WTC11 (cell line): ENCODE measurements at regions of chr16 and their contacts with region 1.

Region 1: DNA sequence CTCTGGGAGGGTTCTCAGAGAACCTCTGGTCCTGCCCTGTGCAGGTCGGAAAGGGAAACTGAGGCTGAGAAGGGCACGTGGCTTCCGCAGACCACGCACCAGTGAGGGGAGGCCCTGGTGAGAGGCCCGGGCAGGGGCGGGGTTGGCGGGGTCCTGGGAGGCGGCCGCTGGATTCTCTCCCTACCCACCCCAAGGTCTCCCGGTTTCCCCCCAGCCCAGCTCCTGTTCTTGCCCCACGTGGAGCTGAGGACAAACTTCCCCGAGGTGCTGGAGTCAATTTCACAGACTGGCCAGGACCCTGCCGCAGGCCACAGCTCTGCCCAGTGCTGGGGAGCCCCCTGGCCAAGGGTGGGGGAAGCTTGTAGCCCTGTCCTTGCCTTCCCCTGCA is 11.5 kb downstream of the CCL17 start:
- DNase-seq: no peak
- ATAC-seq: no peak
- H3K4me3 Mint-ChIP-seq: 0 out of 2 replicates have a peak overlapping the region, but pooled peaks have one; percentile 67
- H3K27ac Mint-ChIP-seq: no peak overlapping the region
- H3K4me1 Mint-ChIP-seq: peaks cover 27% of the 10 kb centered on the region
- H3K27me3 Mint-ChIP-seq: no peaks in the 10 kb centered on the region
- CTCF ChIP-seq: no peak

Region 2: DNA sequence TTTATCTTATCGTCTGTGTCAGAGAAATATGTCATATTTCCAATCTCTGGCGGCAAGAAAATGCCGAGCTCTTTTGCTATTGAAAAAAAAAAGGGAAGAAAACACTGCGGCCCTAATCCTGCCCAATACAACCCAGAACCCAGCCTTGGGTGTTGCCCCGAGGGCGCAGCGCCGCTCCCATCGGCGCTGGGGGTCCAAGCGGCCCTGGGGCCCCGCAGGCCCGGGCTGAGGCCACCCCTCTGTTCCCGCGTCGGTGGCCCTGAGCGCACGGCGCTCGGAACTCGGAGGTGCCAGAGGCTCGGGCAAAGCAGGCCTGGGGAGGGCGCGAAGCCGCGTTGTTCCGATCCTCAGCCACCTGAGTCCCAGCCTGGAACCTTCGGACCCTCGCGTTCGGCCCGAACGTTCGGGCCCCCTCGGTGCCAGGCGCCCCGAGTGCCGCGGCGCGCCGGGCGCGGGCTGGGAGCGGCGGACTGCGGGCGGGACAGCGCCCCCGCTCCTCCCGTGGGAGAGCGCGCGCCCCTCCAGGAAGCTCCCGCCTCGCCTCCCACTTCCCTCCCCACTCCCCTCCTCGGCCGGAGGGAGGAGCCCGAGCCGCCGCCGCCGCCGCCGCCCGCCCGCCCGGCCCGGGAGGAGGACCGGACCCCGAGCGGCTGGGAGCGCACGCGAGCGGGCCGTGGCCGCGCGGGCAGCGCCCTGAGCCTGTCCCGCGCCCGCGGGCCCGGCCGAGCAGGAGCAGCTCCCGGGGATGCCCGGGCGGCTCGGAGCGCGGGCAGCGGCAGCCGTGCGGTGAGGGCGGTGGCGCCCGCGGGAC is 323.9 kb before region 1 on chr16 and contains the start of gene CPNE2:
- CTCF ChIA-PET with region 1: interaction called, 11 read pairs
- POLR2A ChIA-PET with region 1: no interaction called
- DNase-seq: peak; percentile 42
- ATAC-seq: peak; percentile 35
- H3K4me3 Mint-ChIP-seq: peak within 1 kb of the TSS; percentile 86
- H3K27ac Mint-ChIP-seq: no peak within 1 kb of the TSS
- H3K4me1 Mint-ChIP-seq: peaks cover 14% of the 10 kb centered on the region
- H3K27me3 Mint-ChIP-seq: peaks cover 25% of the 10 kb centered on the region
- CTCF ChIP-seq: no peak
- total RNA-seq, gene CPNE2: 14.0 to 17.9 TPM (median 16.7 TPM) in 3 replicates

Region 3: GRCh38 chr16:57300387-57301125 is 115.6 kb before region 1 on chr16:
- CTCF ChIA-PET with region 1: interaction called, 259 read pairs
- POLR2A ChIA-PET with region 1: interaction called, 12 read pairs
- DNase-seq: peak; percentile 99
- ATAC-seq: peak; percentile 85
- H3K4me3 Mint-ChIP-seq: no peak overlapping the region
- H3K27ac Mint-ChIP-seq: no peak overlapping the region
- H3K4me1 Mint-ChIP-seq: peaks cover 16% of the 10 kb centered on the region
- H3K27me3 Mint-ChIP-seq: peaks cover 13% of the 10 kb centered on the region
- CTCF ChIP-seq: peak; percentile 83

Region 4: DNA sequence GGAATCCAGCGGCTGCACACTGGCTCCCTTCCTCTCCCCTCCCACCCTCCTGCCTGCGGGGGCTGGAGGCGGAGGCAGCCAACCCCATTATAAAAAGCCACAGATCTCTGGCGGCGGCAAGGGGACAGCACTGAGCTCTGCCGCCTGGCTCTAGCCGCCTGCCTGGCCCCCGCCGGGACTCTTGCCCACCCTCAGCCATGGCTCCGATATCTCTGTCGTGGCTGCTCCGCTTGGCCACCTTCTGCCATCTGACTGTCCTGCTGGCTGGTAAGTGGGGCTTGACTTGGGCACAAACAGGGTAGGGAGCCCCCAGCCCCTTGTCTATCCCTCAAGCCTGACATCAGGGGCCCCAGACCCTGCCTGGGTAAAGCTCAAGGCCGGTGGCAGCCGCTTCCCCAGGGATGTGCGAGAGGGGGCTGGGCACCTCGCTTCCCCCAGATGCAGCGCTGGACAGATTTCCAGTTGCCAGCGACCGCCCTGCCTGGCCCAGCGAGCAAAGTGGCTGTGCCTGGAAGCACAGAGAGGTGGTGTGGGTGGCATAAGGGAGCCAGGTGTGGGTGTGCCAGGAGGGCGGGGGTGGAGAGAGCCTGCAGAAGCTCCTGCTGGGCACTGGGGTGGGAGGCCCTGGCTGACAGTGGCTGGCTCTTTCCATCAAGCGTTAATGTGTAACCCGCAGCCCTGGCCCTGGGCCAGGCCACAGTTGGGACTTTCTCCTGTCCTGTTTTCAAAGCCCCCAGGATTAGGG is 43.6 kb before region 1 on chr16 and contains the start of gene CX3CL1:
- CTCF ChIA-PET with region 1: interaction called, 63 read pairs
- POLR2A ChIA-PET with region 1: interaction called, 3 read pairs
- DNase-seq: peak; percentile 68
- ATAC-seq: peak; percentile 94
- H3K4me3 Mint-ChIP-seq: peak within 1 kb of the TSS; percentile 36
- H3K27ac Mint-ChIP-seq: 0 out of 2 replicates have a peak within 1 kb of the TSS, but pooled peaks have one; percentile 53
- H3K4me1 Mint-ChIP-seq: peaks cover 13% of the 10 kb centered on the region
- H3K27me3 Mint-ChIP-seq: peaks cover 2% of the 10 kb centered on the region; the same call in 1 of the 2 replicates
- CTCF ChIP-seq: no peak
- total RNA-seq, gene CX3CL1: 0.66 to 1.2 TPM (median 1.1 TPM) in 3 replicates

Region 5: DNA sequence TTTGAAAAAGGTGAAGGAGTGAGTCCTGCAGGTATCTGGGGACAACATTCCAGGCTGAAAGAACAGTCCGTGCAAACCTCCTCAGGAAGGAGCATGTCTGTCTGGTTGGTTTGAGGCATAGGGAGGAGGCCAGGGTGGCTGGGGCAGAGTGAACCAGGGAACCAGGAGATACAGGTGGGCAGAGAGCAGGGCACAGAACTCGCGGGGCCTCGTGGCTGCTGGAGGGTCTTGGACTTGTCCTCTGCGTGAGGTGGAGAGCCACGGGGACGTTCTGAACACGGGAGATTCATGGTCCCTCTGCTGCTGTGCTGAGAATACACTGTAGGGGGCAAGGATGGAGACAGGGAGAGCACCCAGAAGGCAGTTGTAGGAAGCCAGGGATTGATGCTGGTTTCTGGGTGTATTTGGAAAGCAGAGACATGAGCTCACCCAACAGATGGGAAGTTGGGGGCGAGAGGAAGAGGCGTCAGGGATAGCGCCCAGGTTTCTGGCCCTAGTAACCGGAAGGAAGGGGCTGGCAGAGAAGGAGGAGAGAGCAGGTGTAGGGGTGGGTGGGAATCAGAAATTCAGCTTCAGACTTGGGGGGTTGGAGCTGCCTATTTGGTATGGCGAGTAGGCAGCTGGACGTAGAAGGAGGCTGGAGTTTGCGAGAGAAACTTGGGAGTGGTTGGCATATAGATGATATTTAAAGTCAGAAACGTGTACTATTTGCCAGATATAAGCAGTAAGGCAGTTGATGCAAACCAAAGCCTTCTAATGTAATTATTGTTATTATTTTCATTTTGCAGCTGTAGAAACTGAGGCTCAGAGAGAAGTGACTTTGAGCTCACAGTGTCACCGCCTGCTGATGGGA is 11.9 kb before region 1 on chr16 and contains the start of gene CCL17:
- CTCF ChIA-PET with region 1: interaction called, 37 read pairs
- POLR2A ChIA-PET with region 1: interaction called, 3 read pairs
- DNase-seq: no peak
- ATAC-seq: no peak
- H3K4me3 Mint-ChIP-seq: no peak within 1 kb of the TSS
- H3K27ac Mint-ChIP-seq: no peak within 1 kb of the TSS
- H3K4me1 Mint-ChIP-seq: no peaks in the 10 kb centered on the region
- H3K27me3 Mint-ChIP-seq: no peaks in the 10 kb centered on the region; the same call in 1 of the 2 replicates
- CTCF ChIP-seq: no peak
- total RNA-seq, gene CCL17: not detected in 3 replicates

Region 6: GRCh38 chr16:57462209-57462977 is 46.3 kb after region 1 on chr16 and contains the start of gene POLR2C:
- CTCF ChIA-PET with region 1: interaction called, 14 read pairs
- POLR2A ChIA-PET with region 1: no interaction called
- DNase-seq: peak; percentile 94
- ATAC-seq: peak; percentile 93
- H3K4me3 Mint-ChIP-seq: peak within 1 kb of the TSS; percentile 100
- H3K27ac Mint-ChIP-seq: peak within 1 kb of the TSS; percentile 99
- H3K4me1 Mint-ChIP-seq: peaks cover 4% of the 10 kb centered on the region
- H3K27me3 Mint-ChIP-seq: no peaks in the 10 kb centered on the region
- CTCF ChIP-seq: peak; percentile 95
- total RNA-seq, gene POLR2C: 67.9 to 75.4 TPM (median 67.9 TPM) in 3 replicates

Region 7: GRCh38 chr16:57519796-57520360 is 103.8 kb after region 1 on chr16:
- CTCF ChIA-PET with region 1: interaction called, 68 read pairs
- POLR2A ChIA-PET with region 1: interaction called, 3 read pairs
- DNase-seq: peak; percentile 88
- ATAC-seq: peak; percentile 90
- H3K4me3 Mint-ChIP-seq: no peak overlapping the region
- H3K27ac Mint-ChIP-seq: no peak overlapping the region
- H3K4me1 Mint-ChIP-seq: peaks cover 11% of the 10 kb centered on the region; the same call in 1 of the 2 replicates
- H3K27me3 Mint-ChIP-seq: peaks cover 5% of the 10 kb centered on the region; the same call in 1 of the 2 replicates
- CTCF ChIP-seq: peak; percentile 91